B cell (primary cell): ENCODE measurements at regions of chr6 and their contacts with region 1.

Region 1: DNA sequence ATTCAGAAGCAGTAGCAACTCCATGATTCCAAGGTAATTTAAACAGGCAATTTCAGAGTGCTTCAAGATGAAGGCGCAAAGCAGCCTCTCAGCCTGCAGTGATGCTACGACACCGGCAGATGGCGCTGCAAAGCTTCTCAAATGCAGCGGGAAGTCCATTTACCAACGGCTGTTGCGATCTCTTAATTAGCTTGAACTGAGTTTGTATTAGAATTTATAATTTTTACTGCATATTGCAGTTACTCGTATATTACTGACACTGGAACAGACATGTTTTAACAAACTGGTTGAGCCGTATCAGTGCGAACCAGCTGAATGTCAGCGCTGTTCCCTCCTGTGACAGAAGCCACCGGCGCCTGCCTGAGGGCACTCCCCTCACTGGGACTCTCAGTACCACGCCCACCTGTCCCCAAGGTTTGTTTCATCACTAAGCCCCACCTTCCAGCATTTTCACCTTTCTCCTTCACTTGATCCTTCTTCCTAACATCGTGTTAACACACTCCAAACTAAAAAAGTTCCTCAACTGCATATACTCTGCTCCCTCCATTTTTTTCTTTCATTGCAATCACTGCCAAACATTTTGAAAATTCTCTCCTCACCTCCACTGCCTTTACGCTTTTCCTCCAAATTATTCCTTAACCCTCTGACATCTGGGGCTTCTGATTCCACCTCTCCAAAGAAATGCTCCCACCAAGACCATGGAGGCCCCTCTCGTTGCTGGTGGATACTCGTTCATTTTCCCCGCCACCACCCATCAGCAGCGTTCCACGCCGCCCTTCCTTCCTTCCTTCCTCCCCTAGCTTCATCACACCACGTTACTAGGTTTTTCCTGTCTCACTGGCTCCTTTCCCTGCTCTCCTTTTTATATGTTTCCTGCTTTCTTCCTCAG is 14.5 kb downstream of the GNL1 start:
- DNase-seq: peak; percentile 92
- ATAC-seq: peak; percentile 80
- H3K4me3 ChIP-seq: peak overlapping the region; percentile 44 to 73 (median 63)
- H3K4me3 Mint-ChIP-seq: peak overlapping the region; percentile 88
- H3K27ac ChIP-seq: peak overlapping the region; percentile 71 to 89
- H3K27ac Mint-ChIP-seq: peak overlapping the region; percentile 87
- H3K4me1 ChIP-seq: peaks cover 18 to 29% of the 10 kb centered on the region in 2 donors
- H3K4me1 Mint-ChIP-seq: peaks cover 30% of the 10 kb centered on the region
- H3K27me3 ChIP-seq: no peaks in the 10 kb centered on the region
- H3K27me3 Mint-ChIP-seq: no peaks in the 10 kb centered on the region
- CTCF ChIP-seq: peak; percentile 100

Region 2: GRCh38 chr6:30364591-30364990 is 177.2 kb before region 1 on chr6:
- CTCF ChIA-PET with region 1: no interaction called
- POLR2A ChIA-PET with region 1: no interaction called
- intact Hi-C with region 1: no loop called
- DNase-seq: no peak
- ATAC-seq: no peak
- H3K4me3 ChIP-seq: no peak overlapping the region
- H3K4me3 Mint-ChIP-seq: no peak overlapping the region
- H3K27ac ChIP-seq: no peak overlapping the region
- H3K27ac Mint-ChIP-seq: no peak overlapping the region
- H3K4me1 ChIP-seq: no peaks in the 10 kb centered on the region
- H3K4me1 Mint-ChIP-seq: no peaks in the 10 kb centered on the region
- H3K27me3 ChIP-seq: peaks cover 0 to 29% (median 21%) of the 10 kb centered on the region in 4 experiments
- H3K27me3 Mint-ChIP-seq: peaks cover 65% of the 10 kb centered on the region
- CTCF ChIP-seq: peak; percentile 9

Region 3: DNA sequence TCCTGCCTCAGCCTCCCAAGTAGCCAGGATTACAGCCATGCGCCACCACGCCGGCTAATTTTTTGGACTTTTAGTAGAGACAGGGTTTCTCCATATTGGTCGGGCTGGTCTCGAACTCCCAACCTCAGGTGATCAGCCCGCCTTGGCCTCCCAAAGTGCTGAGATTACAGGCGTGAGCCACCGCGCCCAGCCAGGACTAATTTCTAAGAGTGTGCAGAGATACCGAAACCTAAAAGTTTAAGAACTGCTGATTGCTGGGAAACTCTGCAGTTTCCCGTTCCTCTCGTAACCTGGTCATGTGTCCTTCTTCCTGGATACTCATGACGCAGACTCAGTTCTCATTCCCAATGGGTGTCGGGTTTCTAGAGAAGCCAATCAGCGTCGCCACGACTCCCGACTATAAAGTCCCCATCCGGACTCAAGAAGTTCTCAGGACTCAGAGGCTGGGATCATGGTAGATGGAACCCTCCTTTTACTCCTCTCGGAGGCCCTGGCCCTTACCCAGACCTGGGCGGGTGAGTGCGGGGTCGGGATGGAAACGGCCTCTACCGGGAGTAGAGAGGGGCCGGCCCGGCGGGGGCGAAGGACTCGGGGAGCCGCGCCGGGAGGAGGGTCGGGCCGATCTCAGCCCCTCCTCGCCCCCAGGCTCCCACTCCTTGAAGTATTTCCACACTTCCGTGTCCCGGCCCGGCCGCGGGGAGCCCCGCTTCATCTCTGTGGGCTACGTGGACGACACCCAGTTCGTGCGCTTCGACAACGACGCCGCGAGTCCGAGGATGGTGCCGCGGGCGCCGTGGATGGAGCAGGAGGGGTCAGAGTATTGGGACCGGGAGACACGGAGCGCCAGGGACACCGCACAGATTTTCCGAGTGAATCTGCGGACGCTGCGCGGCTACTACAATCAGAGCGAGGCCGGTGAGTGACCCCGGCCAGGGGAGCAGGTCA is 52.4 kb before region 1 on chr6 and contains the start of gene HLA-E:
- CTCF ChIA-PET with region 1: interaction called, 681 read pairs
- POLR2A ChIA-PET with region 1: interaction called, 9 read pairs
- intact Hi-C with region 1: no loop called
- DNase-seq: peak; percentile 98
- ATAC-seq: peak; percentile 84
- H3K4me3 ChIP-seq: peak within 1 kb of the TSS; percentile 99 to 100 (median 100)
- H3K4me3 Mint-ChIP-seq: peak within 1 kb of the TSS; percentile 99
- H3K27ac ChIP-seq: peak within 1 kb of the TSS; percentile 97 to 98
- H3K27ac Mint-ChIP-seq: peak within 1 kb of the TSS; percentile 98
- H3K4me1 ChIP-seq: peaks cover 38 to 50% of the 10 kb centered on the region in 2 donors
- H3K4me1 Mint-ChIP-seq: peaks cover 56% of the 10 kb centered on the region
- H3K27me3 ChIP-seq: no peaks in the 10 kb centered on the region
- H3K27me3 Mint-ChIP-seq: no peaks in the 10 kb centered on the region
- CTCF ChIP-seq: no peak
- total RNA-seq, gene HLA-E: 1,023 and 1,043 TPM in 2 replicates

Region 4: DNA sequence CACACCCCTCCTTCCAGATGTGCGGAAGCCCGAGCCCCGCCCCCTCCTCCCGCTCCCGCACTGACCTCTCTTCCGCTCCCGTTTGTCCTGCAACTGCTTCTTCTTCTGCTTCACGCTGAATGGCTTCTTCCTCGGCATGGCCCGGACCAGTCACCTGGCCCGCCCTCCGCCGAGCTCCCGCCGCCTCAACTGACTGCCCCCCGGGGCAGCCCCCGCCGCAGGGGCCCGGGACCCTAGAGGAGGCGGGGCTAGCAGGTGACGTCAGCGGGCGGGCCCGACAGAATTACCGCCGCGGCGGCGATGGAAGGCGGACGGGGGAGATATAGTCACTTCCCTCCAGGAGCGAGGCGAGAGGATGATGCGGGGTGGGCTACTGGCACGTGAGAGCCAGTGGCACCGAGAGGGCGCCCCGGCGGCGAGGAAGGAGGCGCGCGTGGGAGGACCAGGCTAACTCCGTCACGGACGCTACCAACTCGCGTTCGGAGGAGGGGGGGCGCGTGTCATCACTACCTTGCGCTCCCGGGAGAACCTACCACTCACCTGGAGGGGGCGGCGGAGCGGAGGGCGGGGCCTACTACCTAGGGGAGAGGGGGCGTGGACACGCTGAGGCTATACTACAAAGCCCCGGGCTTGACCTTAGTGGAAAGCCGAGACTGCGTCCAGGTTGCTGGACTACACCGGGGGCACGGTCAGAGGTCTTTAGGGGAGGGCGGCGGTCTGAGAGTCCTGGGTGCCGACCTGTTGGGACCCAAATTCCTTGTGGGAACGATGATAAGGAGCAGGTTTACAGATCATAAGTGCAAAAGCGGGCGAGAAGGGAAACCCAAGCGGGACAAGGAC is 14.5 kb after region 1 on chr6 and contains the start of gene GNL1:
- CTCF ChIA-PET with region 1: interaction called, 94 read pairs
- POLR2A ChIA-PET with region 1: interaction called, 10 read pairs
- intact Hi-C with region 1: loop called (anchors 1 kb)
- DNase-seq: peak; percentile 100
- ATAC-seq: peak; percentile 89
- H3K4me3 ChIP-seq: peak within 1 kb of the TSS; percentile 81 to 100 (median 94)
- H3K4me3 Mint-ChIP-seq: peak within 1 kb of the TSS; percentile 99
- H3K27ac ChIP-seq: peak within 1 kb of the TSS; percentile 91 to 95
- H3K27ac Mint-ChIP-seq: peak within 1 kb of the TSS; percentile 99
- H3K4me1 ChIP-seq: peaks cover 19 to 27% of the 10 kb centered on the region in 2 donors
- H3K4me1 Mint-ChIP-seq: peaks cover 32% of the 10 kb centered on the region
- H3K27me3 ChIP-seq: no peaks in the 10 kb centered on the region
- H3K27me3 Mint-ChIP-seq: no peaks in the 10 kb centered on the region
- CTCF ChIP-seq: no peak
- total RNA-seq, gene GNL1: 107 and 109 TPM in 2 replicates

Region 5: DNA sequence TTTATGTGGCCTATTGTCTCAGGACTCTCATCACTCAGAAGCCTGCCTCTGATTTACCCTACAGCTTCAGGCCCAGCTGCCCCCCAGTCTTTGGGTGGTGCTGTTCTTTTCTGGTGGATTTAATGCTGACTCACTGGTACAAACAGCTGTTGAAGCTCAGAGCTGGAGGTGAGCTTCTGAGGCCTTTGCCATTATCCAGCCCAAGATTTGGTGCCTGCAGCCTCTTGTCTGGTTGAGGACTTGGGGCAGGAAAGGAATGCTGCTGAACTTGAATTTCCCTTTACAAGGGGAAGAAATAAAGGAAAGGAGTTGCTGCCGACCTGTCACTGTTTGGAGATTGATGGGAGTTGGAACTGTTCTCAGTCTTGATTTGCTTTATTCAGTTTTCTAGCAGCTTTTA is 49.2 kb after region 1 on chr6:
- CTCF ChIA-PET with region 1: interaction called, 154 read pairs
- POLR2A ChIA-PET with region 1: interaction called, 4 read pairs
- intact Hi-C with region 1: loop called (anchors 2 kb)
- DNase-seq: no peak
- ATAC-seq: no peak
- H3K4me3 ChIP-seq: no peak overlapping the region
- H3K4me3 Mint-ChIP-seq: no peak overlapping the region
- H3K27ac ChIP-seq: no peak overlapping the region
- H3K27ac Mint-ChIP-seq: no peak overlapping the region
- H3K4me1 ChIP-seq: no peaks in the 10 kb centered on the region
- H3K4me1 Mint-ChIP-seq: no peaks in the 10 kb centered on the region
- H3K27me3 ChIP-seq: no peaks in the 10 kb centered on the region
- H3K27me3 Mint-ChIP-seq: no peaks in the 10 kb centered on the region
- CTCF ChIP-seq: no peak

Region 6: DNA sequence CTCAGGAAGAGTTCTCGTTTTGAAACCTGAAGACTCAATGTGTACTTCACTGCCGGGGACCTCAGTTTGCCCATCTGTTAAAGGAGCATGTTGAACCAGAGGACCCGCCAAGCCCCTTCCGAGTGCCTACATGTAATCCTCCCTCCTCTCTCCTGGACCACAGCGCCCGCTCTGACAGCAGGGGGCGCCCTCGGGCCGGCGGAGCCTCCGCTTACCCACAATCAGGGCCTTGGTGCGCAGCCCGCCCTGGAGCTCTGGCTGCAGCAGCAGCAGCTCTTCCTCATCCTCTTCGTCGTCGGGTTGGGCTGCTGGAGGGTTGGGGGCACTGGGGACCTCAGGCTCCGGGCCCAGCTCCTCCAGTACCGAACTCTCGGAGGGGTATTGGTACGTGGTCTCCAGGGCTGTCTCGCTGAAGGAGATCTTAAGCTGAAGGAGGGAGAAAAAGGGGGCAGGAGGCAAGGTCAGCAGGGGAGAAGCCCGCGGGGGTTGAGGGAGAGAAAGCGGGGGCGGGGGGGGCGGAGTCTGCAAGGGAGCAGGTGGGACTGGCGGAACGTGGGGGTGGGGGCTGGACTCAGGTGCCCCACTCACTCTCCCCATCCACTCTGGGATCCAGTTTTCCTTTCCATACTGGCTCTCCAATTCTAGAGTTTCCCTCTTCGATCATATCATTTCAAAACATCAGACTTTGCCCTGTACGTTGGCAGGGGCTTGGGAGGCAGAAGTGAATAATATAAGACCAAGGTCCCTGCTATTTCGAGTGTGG is 137.4 kb after region 1 on chr6:
- CTCF ChIA-PET with region 1: interaction called, 10 read pairs
- POLR2A ChIA-PET with region 1: no interaction called
- intact Hi-C with region 1: no loop called
- DNase-seq: peak; percentile 92
- ATAC-seq: peak; percentile 29
- H3K4me3 ChIP-seq: peak overlapping the region in 4 of 5 experiments; percentile 31 to 100 (median 37)
- H3K4me3 Mint-ChIP-seq: peak overlapping the region; percentile 65
- H3K27ac ChIP-seq: peak overlapping the region in 1 of 2 donors; percentile 97
- H3K27ac Mint-ChIP-seq: peak overlapping the region; percentile 99
- H3K4me1 ChIP-seq: peaks cover 38 to 39% of the 10 kb centered on the region in 2 donors
- H3K4me1 Mint-ChIP-seq: peaks cover 51% of the 10 kb centered on the region
- H3K27me3 ChIP-seq: no peaks in the 10 kb centered on the region
- H3K27me3 Mint-ChIP-seq: no peaks in the 10 kb centered on the region
- CTCF ChIP-seq: peak; percentile 94

Region 7: GRCh38 chr6:30990422-30991086 is 448.8 kb after region 1 on chr6:
- CTCF ChIA-PET with region 1: no interaction called
- POLR2A ChIA-PET with region 1: no interaction called
- intact Hi-C with region 1: no loop called
- DNase-seq: peak; percentile 26
- ATAC-seq: no peak
- H3K4me3 ChIP-seq: no peak overlapping the region
- H3K4me3 Mint-ChIP-seq: peak overlapping the region; percentile 37
- H3K27ac ChIP-seq: no peak overlapping the region
- H3K27ac Mint-ChIP-seq: no peak overlapping the region
- H3K4me1 ChIP-seq: no peaks in the 10 kb centered on the region
- H3K4me1 Mint-ChIP-seq: peaks cover 7% of the 10 kb centered on the region
- H3K27me3 ChIP-seq: no peaks in the 10 kb centered on the region
- H3K27me3 Mint-ChIP-seq: peaks cover 12% of the 10 kb centered on the region
- CTCF ChIP-seq: no peak

Region 8: GRCh38 chr6:31350196-31351032 is 808.7 kb after region 1 on chr6:
- CTCF ChIA-PET with region 1: no interaction called
- POLR2A ChIA-PET with region 1: no interaction called
- intact Hi-C with region 1: no loop called
- DNase-seq: peak; percentile 80
- ATAC-seq: peak; percentile 55
- H3K4me3 ChIP-seq: peak overlapping the region in 1 of 5 experiments; percentile 10
- H3K4me3 Mint-ChIP-seq: peak overlapping the region; percentile 27
- H3K27ac ChIP-seq: peak overlapping the region; percentile 4 to 36
- H3K27ac Mint-ChIP-seq: peak overlapping the region; percentile 80
- H3K4me1 ChIP-seq: peaks cover 50 to 54% of the 10 kb centered on the region in 2 donors
- H3K4me1 Mint-ChIP-seq: peaks cover 64% of the 10 kb centered on the region
- H3K27me3 ChIP-seq: no peaks in the 10 kb centered on the region
- H3K27me3 Mint-ChIP-seq: no peaks in the 10 kb centered on the region
- CTCF ChIP-seq: no peak